ENCODE measurements at regions of chr15 and their contacts with region 1.

Region 1: DNA sequence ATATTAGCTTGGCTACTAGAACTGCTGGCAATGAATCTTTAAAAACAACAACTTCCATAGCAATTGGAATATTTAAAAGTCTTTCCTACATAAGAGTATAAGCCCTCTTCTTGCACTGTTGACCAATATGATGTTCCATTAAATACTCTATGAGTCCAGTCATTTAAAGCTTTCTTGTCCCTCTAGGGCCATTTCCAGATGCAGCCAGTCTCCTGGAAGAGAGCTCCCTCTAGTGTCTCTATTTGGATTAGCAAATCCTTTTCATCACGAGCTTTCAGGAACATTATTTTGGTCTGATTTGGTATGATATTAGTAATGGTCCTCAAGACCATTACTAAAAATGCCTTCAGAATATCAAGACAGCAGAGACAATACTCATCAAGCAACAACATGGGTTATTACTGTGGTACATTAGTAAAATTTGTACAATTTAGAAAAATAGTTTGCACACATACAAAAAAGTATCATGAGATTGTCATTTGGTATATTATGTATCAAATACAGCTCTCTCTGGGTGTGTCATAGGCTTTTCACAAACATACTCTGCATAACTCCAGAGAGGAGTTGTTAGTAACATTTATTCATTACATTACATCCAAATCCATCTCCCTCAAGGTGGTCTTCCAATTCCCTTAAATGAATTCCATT is 101.3 kb downstream of the DPH6 start:
- DNase-seq: no peak
- H3K4me3 Mint-ChIP-seq: no peak overlapping the region
- H3K27ac Mint-ChIP-seq: no peak overlapping the region
- H3K4me1 Mint-ChIP-seq: no peaks in the 10 kb centered on the region
- H3K27me3 Mint-ChIP-seq: no peaks in the 10 kb centered on the region

Region 2: DNA sequence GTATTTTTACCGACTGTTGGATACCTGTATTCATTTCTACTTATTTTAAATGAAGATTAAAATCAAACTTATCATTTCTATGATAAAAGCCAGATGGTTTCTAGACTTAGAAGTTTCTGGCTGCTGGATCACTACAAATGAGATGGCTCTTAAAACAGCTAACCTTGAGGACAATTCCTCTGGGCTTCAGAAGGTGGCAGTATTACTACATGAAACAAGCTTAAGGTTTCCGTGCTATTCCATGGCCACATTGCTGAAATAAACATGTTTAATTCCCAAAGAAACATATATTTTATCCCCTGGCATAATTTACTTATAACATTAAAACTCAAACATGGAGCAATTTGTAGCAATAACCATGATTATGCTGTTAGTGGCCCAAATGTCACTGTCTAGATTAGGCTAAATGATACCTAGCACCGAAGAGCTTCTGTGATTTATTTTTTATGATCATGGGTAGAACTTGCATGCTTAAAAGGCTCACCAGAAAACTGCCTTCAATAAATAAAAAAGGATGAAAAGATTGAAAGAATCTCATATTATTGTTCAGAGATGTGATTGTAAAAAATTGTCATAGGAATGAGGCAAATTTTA is 155.6 kb before region 1 on chr15:
- intact Hi-C with region 1: loop called (anchors 10 kb)
- DNase-seq: no peak
- H3K4me3 Mint-ChIP-seq: no peak overlapping the region
- H3K27ac Mint-ChIP-seq: no peak overlapping the region
- H3K4me1 Mint-ChIP-seq: no peaks in the 10 kb centered on the region
- H3K27me3 Mint-ChIP-seq: no peaks in the 10 kb centered on the region

Measured in activated T-helper 2 cell treated with anti-CD3 and anti-CD28 coated beads, Interferon-gamma antibody, Interleukin-2, Interleukin-4, amounts not matched to agents 10 μg/mL and 5 μg/mL and 100 μg/mL, durations not matched to agents 14 hours and 24 hours and 36 hours (primary cell).